Heart right ventricle (tissue), 16 donors: ENCODE measurements at regions of chr11 and their contacts with region 1.

Region 1: GRCh38 chr11:131867457-131868257 is 497.2 kb downstream of the NTM start:
- DNase-seq: peak; percentile 62 to 64
- ATAC-seq: peak; percentile 50 to 89 (median 80)
- H3K4me3 ChIP-seq: no peak overlapping the region
- H3K27ac ChIP-seq: no peak overlapping the region
- H3K4me1 ChIP-seq: no peaks in the 10 kb centered on the region
- H3K27me3 ChIP-seq: peaks cover 0 to 23% (median 0%) of the 10 kb centered on the region in 7 donors
- CTCF ChIP-seq: peak in 8 of 9 donors; percentile 51 to 81 (median 67)

Region 2: GRCh38 chr11:132028380-132029240 is 161.0 kb after region 1 on chr11:
- intact Hi-C with region 1: loop called in 5 of 10 experiments (anchors 2 to 10 kb)
- DNase-seq: peak in 1 of 2 donors; percentile 11
- ATAC-seq: peak in 2 of 8 donors; percentile 44 to 83
- H3K4me3 ChIP-seq: no peak overlapping the region
- H3K27ac ChIP-seq: no peak overlapping the region
- H3K4me1 ChIP-seq: peaks cover 0 to 11% (median 0%) of the 10 kb centered on the region in 9 donors
- H3K27me3 ChIP-seq: no peaks in the 10 kb centered on the region
- CTCF ChIP-seq: peak in 7 of 9 donors; percentile 28 to 58 (median 46)

Region 3: DNA sequence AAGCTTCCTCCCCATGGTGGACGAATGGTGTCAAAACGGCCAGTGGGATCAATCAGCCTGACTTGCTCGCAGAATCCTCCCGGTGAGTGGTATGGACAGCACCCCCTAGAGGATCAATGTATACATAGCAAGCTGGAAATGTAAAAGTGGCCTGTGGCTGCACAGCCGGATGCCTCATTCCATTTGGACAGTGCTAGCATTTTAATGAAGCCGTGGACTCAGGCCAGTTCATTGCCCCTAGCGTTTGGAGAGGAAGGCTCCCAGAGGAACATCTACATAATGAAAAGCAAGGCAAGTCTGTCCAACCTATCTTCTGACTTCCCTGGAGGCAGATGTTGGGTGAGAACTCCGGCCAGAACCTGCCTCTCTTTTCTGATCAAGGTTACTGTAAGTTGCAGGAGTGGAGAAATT is 445.0 kb after region 1 on chr11:
- intact Hi-C with region 1: loop called in 1 of 10 experiments (anchors 10 kb)
- DNase-seq: no peak
- ATAC-seq: peak in 6 of 8 donors; percentile 30 to 61 (median 42)
- H3K4me3 ChIP-seq: no peak overlapping the region
- H3K27ac ChIP-seq: no peak overlapping the region
- H3K4me1 ChIP-seq: peaks cover 0 to 12% (median 0%) of the 10 kb centered on the region in 9 donors
- H3K27me3 ChIP-seq: no peaks in the 10 kb centered on the region
- CTCF ChIP-seq: peak; percentile 33 to 64 (median 58)

Region 4: DNA sequence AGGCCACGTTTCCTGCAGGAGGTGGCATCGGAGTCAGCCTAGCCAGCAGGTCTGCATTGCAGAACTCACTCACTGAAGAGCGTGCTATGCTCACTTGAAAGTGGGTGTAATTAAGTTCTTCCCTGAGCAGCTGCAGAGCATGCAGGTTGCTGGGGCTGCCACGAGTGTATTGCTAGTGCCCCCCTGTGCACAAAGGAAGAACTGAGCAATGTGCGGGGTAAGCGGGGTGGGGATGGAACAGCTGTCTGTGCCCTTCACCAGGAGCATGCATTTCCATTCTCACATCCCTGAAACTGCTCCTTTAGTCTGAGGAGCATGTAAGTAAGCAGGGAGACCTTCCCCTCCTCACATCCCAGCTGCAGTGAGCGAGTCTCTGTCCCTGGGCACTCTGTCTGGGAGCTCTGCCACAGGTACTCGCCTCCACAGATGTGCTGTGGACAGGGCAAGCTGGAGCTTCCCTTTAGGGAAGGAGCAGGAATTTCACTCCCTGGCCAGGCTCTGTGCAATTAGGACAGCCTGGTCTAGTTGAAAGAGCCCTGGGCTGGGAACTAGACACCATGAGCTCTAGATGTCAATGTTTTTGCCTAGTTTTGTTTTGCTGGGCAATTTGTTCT is 534.5 kb after region 1 on chr11:
- intact Hi-C with region 1: loop called in 4 of 10 experiments (anchors 5 to 10 kb)
- DNase-seq: peak; percentile 13 to 17
- ATAC-seq: peak in 7 of 8 donors; percentile 49 to 89 (median 75)
- H3K4me3 ChIP-seq: no peak overlapping the region
- H3K27ac ChIP-seq: no peak overlapping the region
- H3K4me1 ChIP-seq: no peaks in the 10 kb centered on the region
- H3K27me3 ChIP-seq: peaks cover 0 to 59% (median 29%) of the 10 kb centered on the region in 7 donors
- CTCF ChIP-seq: peak; percentile 10 to 60 (median 44)

Region 5: GRCh38 chr11:133064152-133064877 is 1196.7 kb after region 1 on chr11:
- intact Hi-C with region 1: loop called in 1 of 10 experiments (anchors 10 kb)
- DNase-seq: peak; percentile 69 to 72
- ATAC-seq: peak; percentile 89 to 97 (median 96)
- H3K4me3 ChIP-seq: peak overlapping the region; percentile 43 to 74 (median 59)
- H3K27ac ChIP-seq: peak overlapping the region; percentile 2 to 84 (median 74)
- H3K4me1 ChIP-seq: peaks cover 0 to 15% (median 5%) of the 10 kb centered on the region in 9 donors
- H3K27me3 ChIP-seq: peaks cover under 1 to 26% (median 10%) of the 10 kb centered on the region in 7 donors
- CTCF ChIP-seq: peak; percentile 32 to 76 (median 70)